CD8-positive, alpha-beta memory T cell (primary cell): ENCODE measurements at regions of chr1 and their contacts with region 1.

Region 1: GRCh38 chr1:59747420-59748024 is 67.2 kb upstream of the HOOK1 start:
- DNase-seq: no peak
- H3K4me3 ChIP-seq: no peak overlapping the region
- H3K4me3 Mint-ChIP-seq: no peak overlapping the region
- H3K27ac ChIP-seq: no peak overlapping the region
- H3K27ac Mint-ChIP-seq: no peak overlapping the region
- H3K4me1 ChIP-seq: no peaks in the 10 kb centered on the region
- H3K4me1 Mint-ChIP-seq: no peaks in the 10 kb centered on the region
- H3K27me3 ChIP-seq: no peaks in the 10 kb centered on the region
- H3K27me3 Mint-ChIP-seq: no peaks in the 10 kb centered on the region

Region 2: DNA sequence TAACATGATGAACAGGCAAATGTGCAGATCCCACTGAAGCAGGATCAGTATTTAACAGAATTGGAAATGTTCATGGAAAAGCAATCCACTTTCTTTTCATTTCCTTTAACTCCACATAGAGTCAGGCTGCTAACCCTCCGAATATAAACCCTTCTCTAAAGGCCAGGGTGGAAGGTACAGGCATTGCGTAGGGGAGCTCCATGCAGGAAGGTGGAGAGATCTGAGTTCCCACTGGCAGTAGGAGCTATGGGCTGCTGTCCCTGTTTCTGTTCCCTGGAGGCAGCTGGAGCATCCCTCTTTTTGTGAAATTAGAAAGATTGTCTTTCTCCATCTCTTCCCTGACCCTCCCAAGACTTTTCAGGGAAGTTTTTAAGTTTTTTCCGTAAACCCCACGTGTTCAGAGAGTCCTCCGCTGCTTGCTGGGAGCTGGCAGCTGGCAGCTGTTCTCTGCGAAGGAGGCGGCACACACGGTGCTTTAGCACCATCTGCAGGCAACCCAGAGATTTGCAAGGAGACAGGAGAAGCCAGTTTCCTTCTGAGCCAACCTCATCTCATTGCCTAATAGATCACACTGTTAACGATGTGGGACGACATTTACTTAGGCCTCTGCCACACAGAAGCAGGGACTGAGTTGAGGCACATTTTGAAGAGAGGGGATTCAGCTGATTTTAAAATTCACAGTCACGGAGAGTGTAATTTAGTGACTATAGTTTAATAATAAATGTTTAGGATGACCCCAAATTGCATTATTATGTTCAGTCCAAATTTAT is 11.8 kb after region 1 on chr1:
- CTCF ChIA-PET with region 1: interaction called, 10 read pairs
- POLR2A ChIA-PET with region 1: no interaction called
- DNase-seq: peak; percentile 45 to 74 (median 57)
- H3K4me3 ChIP-seq: no peak overlapping the region
- H3K4me3 Mint-ChIP-seq: peak overlapping the region in 3 of 7 donors; percentile 25 to 55 (median 40)
- H3K27ac ChIP-seq: no peak overlapping the region
- H3K27ac Mint-ChIP-seq: peak overlapping the region in 2 of 8 donors; percentile 45 to 53
- H3K4me1 ChIP-seq: no peaks in the 10 kb centered on the region
- H3K4me1 Mint-ChIP-seq: peaks cover 4 to 5% (median 4%) of the 10 kb centered on the region in 3 donors
- H3K27me3 ChIP-seq: no peaks in the 10 kb centered on the region
- H3K27me3 Mint-ChIP-seq: no peaks in the 10 kb centered on the region